OCI-LY7 (cell line): ENCODE measurements at regions of chr20 and their contacts with region 1.

Region 1: GRCh38 chr20:31496761-31497295 is 17.4 kb upstream of the HM13 start:
- DNase-seq: no peak
- H3K4me3 ChIP-seq: no peak overlapping the region
- H3K27ac ChIP-seq: no peak overlapping the region
- H3K4me1 ChIP-seq: no peaks in the 10 kb centered on the region
- CTCF ChIP-seq: no peak

Region 2: DNA sequence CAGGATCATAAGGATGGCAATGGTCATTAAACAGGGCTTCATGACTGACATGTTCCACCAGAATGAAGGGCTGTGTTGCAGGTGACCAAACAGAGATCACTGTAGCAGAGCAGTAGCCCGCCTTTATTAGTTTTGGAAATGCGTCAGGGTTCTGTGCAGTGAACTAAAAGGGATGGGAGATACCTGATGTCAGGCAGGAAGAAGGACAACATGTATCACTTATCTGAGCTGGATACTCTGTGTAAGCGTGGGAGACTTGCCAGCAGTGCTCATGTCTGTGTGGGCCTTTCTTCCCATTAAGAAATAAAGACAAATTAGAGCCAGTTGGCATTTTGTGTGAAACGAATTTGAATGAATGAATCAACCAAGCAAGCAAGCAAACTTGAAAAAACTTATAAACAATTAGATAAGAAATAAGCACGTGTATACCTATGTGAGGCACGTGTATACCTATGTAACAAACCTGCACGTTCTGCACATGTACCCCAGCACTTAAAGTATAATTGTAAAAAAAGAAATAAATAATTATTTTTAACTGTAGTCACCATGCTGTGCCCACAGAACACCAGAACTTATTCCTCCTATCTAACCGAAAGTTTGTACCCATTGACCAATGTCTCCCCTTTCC is 188.2 kb before region 1 on chr20 and contains the start of gene DEFB116:
- CTCF ChIA-PET with region 1: no interaction called
- POLR2A ChIA-PET with region 1: no interaction called
- intact Hi-C with region 1: loop called (anchors 2 kb)
- DNase-seq: no peak
- H3K4me3 ChIP-seq: no peak within 1 kb of the TSS
- H3K27ac ChIP-seq: no peak within 1 kb of the TSS
- H3K4me1 ChIP-seq: no peaks in the 10 kb centered on the region
- CTCF ChIP-seq: no peak
- total RNA-seq, gene DEFB116: not detected in 2 replicates

Region 3: GRCh38 chr20:31454365-31454764 is 42.5 kb before region 1 on chr20:
- CTCF ChIA-PET with region 1: interaction called, 22 read pairs
- POLR2A ChIA-PET with region 1: interaction called, 15 read pairs
- intact Hi-C with region 1: no loop called
- DNase-seq: no peak
- H3K4me3 ChIP-seq: no peak overlapping the region
- H3K27ac ChIP-seq: no peak overlapping the region
- H3K4me1 ChIP-seq: no peaks in the 10 kb centered on the region
- CTCF ChIP-seq: no peak